ENCODE measurements at regions of chr12 and their contacts with region 1.

Region 1: GRCh38 chr12:107131832-107132616 is 38.7 kb upstream of the CRY1 start:
- DNase-seq: peak in 3 of 6 donors; percentile 6 to 27 (median 19)
- ATAC-seq: peak; percentile 38 to 86 (median 84)
- H3K4me3 ChIP-seq: no peak overlapping the region
- H3K27ac ChIP-seq: no peak overlapping the region
- H3K4me1 ChIP-seq: no peaks in the 10 kb centered on the region
- H3K27me3 ChIP-seq: no peaks in the 10 kb centered on the region
- CTCF ChIP-seq: peak; percentile 44 to 64 (median 52)

Region 2: GRCh38 chr12:106903241-106903945 is 228.6 kb before region 1 on chr12:
- intact Hi-C with region 1: no loop called
- DNase-seq: peak; percentile 80 to 92 (median 89)
- ATAC-seq: peak; percentile 100
- H3K4me3 ChIP-seq: peak overlapping the region in 3 of 4 donors; percentile 9 to 37 (median 32)
- H3K27ac ChIP-seq: no peak overlapping the region
- H3K4me1 ChIP-seq: no peaks in the 10 kb centered on the region
- H3K27me3 ChIP-seq: no peaks in the 10 kb centered on the region
- CTCF ChIP-seq: no peak

Region 3: DNA sequence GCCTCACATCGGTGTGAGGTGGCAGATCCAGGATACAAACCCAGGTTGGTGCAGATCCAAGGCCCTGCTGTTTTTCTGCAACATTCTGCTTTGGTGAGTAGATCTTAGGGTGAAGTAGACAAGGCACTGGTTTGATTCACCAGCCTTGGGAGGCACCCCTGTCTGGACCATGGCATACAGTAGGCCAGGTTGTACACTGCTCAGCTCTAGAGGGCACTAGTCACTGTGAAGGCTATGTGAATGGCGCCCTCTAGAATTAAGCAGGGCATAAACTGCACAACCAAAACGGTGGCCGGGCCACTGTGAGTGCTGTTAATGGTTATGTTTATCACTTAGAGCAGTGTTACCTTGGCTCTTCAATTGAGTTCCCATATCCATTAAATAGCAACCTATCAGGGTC is 273.0 kb after region 1 on chr12:
- intact Hi-C with region 1: loop called in 1 of 3 experiments (anchors 5 kb)
- DNase-seq: no peak
- ATAC-seq: peak in 2 of 4 donors; percentile 26 to 58
- H3K4me3 ChIP-seq: no peak overlapping the region
- H3K27ac ChIP-seq: no peak overlapping the region
- H3K4me1 ChIP-seq: no peaks in the 10 kb centered on the region
- H3K27me3 ChIP-seq: no peaks in the 10 kb centered on the region
- CTCF ChIP-seq: peak in 1 of 4 donors; percentile 13

Region 4: GRCh38 chr12:107607464-107608392 is 475.7 kb after region 1 on chr12:
- intact Hi-C with region 1: loop called (anchors 5 to 10 kb)
- DNase-seq: peak; percentile 61 to 94 (median 84)
- ATAC-seq: peak; percentile 64 to 92 (median 91)
- H3K4me3 ChIP-seq: no peak overlapping the region
- H3K27ac ChIP-seq: no peak overlapping the region
- H3K4me1 ChIP-seq: no peaks in the 10 kb centered on the region
- H3K27me3 ChIP-seq: no peaks in the 10 kb centered on the region
- CTCF ChIP-seq: peak; percentile 87 to 94 (median 91)

Measured in pancreas (tissue), 10 donors.